Activated CD8-positive, alpha-beta T cell treated with anti-CD3 and anti-CD28 coated beads for 36 hours (primary cell): ENCODE measurements at regions of chr1 and their contacts with region 1.

Region 1: DNA sequence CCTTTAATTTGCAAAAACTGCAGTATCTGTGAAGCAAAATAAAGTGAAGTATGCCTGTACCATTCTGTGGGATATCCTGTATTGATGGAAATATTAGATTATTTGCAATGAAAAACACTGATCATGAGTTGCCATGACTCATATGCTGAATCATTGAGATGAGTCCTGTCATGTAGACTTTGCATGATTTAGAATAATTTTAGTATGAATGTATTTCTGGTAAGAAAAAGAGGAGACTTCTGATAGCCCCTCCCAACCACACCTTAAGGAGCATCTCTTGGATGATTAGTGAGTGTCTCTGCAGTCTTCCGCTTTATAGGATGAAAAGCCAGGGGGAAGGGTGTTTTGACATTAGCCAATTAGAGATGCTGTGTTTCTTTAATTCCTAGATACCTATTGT is 55.2 kb upstream of the PTGS2 start:
- DNase-seq: no peak
- ATAC-seq: no peak
- H3K4me3 Mint-ChIP-seq: no peak overlapping the region
- H3K27ac Mint-ChIP-seq: no peak overlapping the region
- H3K4me1 Mint-ChIP-seq: peaks cover 16% of the 10 kb centered on the region
- H3K27me3 Mint-ChIP-seq: peaks cover 6% of the 10 kb centered on the region
- CTCF ChIP-seq: no peak

Region 2: GRCh38 chr1:186722711-186723309 is 12.7 kb before region 1 on chr1:
- CTCF ChIA-PET with region 1: interaction called, 10 read pairs
- POLR2A ChIA-PET with region 1: no interaction called
- intact Hi-C with region 1: no loop called
- DNase-seq: peak; percentile 39
- ATAC-seq: peak; percentile 42
- H3K4me3 Mint-ChIP-seq: no peak overlapping the region
- H3K27ac Mint-ChIP-seq: no peak overlapping the region
- H3K4me1 Mint-ChIP-seq: no peaks in the 10 kb centered on the region
- H3K27me3 Mint-ChIP-seq: no peaks in the 10 kb centered on the region
- CTCF ChIP-seq: peak; percentile 66